ENCODE measurements at regions of chr16 and their contacts with region 1.

Region 1: DNA sequence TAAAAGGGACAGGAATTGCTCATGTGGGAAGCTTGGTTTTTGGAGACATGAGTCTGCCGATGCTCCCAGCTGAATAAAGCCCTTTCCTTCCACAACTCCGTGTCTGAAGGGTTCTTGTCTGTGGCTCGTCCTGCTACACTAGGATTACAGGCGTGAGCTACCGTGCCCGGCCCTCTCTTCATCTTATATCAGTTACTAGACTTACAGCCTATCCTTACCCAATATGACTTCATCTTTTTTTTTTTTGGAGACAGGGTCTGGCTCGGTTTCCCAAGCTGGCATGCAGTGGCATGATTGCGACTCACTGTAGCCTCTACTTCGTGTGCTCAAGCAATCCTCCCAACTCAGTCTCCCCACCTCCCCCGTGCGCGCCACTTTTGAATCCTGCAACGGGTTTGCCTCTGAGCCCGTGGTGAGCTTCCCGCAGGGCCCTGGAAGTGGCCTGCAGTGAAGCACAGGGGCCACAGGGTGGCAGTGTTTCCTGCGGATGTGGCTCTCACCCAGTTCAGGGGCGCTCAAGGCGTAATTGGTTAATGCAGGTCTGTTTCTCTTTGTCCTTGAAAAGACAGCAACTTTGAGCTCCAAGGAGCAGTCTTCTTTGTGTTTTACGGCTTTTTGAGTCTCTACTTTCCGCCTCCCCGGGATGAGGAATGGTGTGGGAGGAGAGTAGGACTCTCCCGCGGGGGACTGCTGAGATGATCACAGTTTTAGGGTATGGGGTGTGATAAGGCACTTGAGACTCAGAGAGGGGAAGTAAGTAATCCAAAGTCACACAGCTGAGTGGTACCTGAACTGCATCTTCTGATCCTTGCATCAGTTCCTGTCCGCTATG is 22.7 kb upstream of the GPRC5B start:
- DNase-seq: peak; percentile 88
- ATAC-seq: peak; percentile 95
- H3K4me3 Mint-ChIP-seq: peak overlapping the region; percentile 12; the same call in 1 of the 2 replicates
- H3K27ac Mint-ChIP-seq: peak overlapping the region; percentile 66; the same call in 1 of the 2 replicates
- H3K4me1 Mint-ChIP-seq: peaks cover 15% of the 10 kb centered on the region
- H3K27me3 Mint-ChIP-seq: no peaks in the 10 kb centered on the region; the same call in 1 of the 2 replicates
- CTCF ChIP-seq: peak; percentile 92

Region 2: GRCh38 chr16:19696328-19696727 is 211.0 kb before region 1 on chr16:
- CTCF ChIA-PET with region 1: no interaction called
- POLR2A ChIA-PET with region 1: no interaction called
- DNase-seq: no peak
- ATAC-seq: no peak
- H3K4me3 Mint-ChIP-seq: no peak overlapping the region
- H3K27ac Mint-ChIP-seq: peak overlapping the region; percentile 20; the same call in 1 of the 2 replicates
- H3K4me1 Mint-ChIP-seq: no peaks in the 10 kb centered on the region
- H3K27me3 Mint-ChIP-seq: no peaks in the 10 kb centered on the region
- CTCF ChIP-seq: no peak

Region 3: GRCh38 chr16:19959736-19960135 is 52.4 kb after region 1 on chr16:
- CTCF ChIA-PET with region 1: interaction called, 16 read pairs
- POLR2A ChIA-PET with region 1: no interaction called
- DNase-seq: no peak
- ATAC-seq: peak; percentile 44; the same call in 1 of the 2 replicates
- H3K4me3 Mint-ChIP-seq: no peak overlapping the region
- H3K27ac Mint-ChIP-seq: no peak overlapping the region; the same call in 1 of the 2 replicates
- H3K4me1 Mint-ChIP-seq: peaks cover 44% of the 10 kb centered on the region
- H3K27me3 Mint-ChIP-seq: no peaks in the 10 kb centered on the region
- CTCF ChIP-seq: no peak

Region 4: GRCh38 chr16:20026361-20027072 is 119.1 kb after region 1 on chr16:
- CTCF ChIA-PET with region 1: interaction called, 15 read pairs
- POLR2A ChIA-PET with region 1: interaction called, 3 read pairs
- DNase-seq: no peak
- ATAC-seq: no peak
- H3K4me3 Mint-ChIP-seq: no peak overlapping the region
- H3K27ac Mint-ChIP-seq: no peak overlapping the region
- H3K4me1 Mint-ChIP-seq: no peaks in the 10 kb centered on the region
- H3K27me3 Mint-ChIP-seq: no peaks in the 10 kb centered on the region; the same call in 1 of the 2 replicates
- CTCF ChIP-seq: no peak

Region 5: GRCh38 chr16:20084624-20085211 is 177.3 kb after region 1 on chr16:
- CTCF ChIA-PET with region 1: interaction called, 10 read pairs
- POLR2A ChIA-PET with region 1: no interaction called
- DNase-seq: no peak
- ATAC-seq: no peak
- H3K4me3 Mint-ChIP-seq: no peak overlapping the region
- H3K27ac Mint-ChIP-seq: no peak overlapping the region
- H3K4me1 Mint-ChIP-seq: 0 out of 2 replicates have a peak, but pooled peaks cover 5% of the 10 kb centered on the region
- H3K27me3 Mint-ChIP-seq: no peaks in the 10 kb centered on the region
- CTCF ChIP-seq: no peak

Region 6: GRCh38 chr16:20203272-20203671 is 295.9 kb after region 1 on chr16:
- CTCF ChIA-PET with region 1: interaction called, 11 read pairs
- POLR2A ChIA-PET with region 1: no interaction called
- DNase-seq: no peak
- ATAC-seq: no peak
- H3K4me3 Mint-ChIP-seq: no peak overlapping the region
- H3K27ac Mint-ChIP-seq: no peak overlapping the region
- H3K4me1 Mint-ChIP-seq: peaks cover 8% of the 10 kb centered on the region
- H3K27me3 Mint-ChIP-seq: no peaks in the 10 kb centered on the region; the same call in 1 of the 2 replicates
- CTCF ChIP-seq: no peak

Region 7: DNA sequence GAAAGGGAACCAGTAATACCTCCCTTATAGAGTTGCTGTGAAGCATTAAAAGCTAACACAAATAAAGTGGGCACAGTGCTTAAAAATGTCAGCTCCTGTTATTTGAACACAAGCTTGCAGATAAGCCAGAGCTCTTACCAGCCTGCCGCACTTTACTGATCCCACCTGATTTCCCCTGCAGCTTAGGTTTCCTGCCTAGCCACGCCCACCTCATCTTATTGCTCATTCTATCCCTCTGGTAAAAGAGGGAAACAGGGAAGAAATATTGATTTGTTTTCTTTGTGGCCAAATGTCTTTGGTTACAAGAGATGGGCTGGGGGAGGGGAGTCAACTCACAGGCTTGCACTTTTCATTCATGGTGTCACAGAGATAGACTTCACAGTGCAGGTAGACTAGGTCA is 429.6 kb after region 1 on chr16:
- CTCF ChIA-PET with region 1: interaction called, 16 read pairs
- POLR2A ChIA-PET with region 1: no interaction called
- DNase-seq: no peak
- ATAC-seq: peak; percentile 28; the same call in 1 of the 2 replicates
- H3K4me3 Mint-ChIP-seq: no peak overlapping the region
- H3K27ac Mint-ChIP-seq: no peak overlapping the region
- H3K4me1 Mint-ChIP-seq: peaks cover 18% of the 10 kb centered on the region
- H3K27me3 Mint-ChIP-seq: no peaks in the 10 kb centered on the region
- CTCF ChIP-seq: no peak